Colonic mucosa (tissue), 4 donors: ENCODE measurements at regions of chr20 and their contacts with region 1.

Region 1: DNA sequence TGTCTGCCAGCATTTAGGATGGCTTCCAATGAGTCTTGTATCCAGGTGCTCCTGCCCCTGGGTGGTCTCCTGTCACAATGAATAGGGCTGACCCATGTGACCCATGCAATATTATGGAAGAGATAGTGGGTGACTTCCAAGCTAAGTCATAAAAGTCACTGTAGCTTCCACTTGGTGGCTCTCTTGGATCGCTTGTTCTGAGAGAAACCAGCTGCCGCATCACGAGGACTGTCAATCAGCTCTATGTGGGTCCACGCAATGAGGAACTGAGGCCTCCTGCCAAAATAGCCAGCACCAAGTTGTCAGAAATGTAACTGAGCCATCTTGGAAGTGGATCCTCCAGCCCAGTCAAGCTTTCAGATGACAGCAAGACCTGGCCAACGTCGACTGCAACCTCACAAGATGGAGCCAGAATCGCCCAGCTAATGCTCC is 14.9 kb upstream of the MATN4 start:
- DNase-seq: peak; percentile 74
- H3K4me3 ChIP-seq: no peak overlapping the region
- H3K27ac ChIP-seq: peak overlapping the region; percentile 30
- H3K4me1 ChIP-seq: peaks cover 4% of the 10 kb centered on the region
- H3K27me3 ChIP-seq: no peaks in the 10 kb centered on the region
- CTCF ChIP-seq: peak; percentile 31

Region 2: DNA sequence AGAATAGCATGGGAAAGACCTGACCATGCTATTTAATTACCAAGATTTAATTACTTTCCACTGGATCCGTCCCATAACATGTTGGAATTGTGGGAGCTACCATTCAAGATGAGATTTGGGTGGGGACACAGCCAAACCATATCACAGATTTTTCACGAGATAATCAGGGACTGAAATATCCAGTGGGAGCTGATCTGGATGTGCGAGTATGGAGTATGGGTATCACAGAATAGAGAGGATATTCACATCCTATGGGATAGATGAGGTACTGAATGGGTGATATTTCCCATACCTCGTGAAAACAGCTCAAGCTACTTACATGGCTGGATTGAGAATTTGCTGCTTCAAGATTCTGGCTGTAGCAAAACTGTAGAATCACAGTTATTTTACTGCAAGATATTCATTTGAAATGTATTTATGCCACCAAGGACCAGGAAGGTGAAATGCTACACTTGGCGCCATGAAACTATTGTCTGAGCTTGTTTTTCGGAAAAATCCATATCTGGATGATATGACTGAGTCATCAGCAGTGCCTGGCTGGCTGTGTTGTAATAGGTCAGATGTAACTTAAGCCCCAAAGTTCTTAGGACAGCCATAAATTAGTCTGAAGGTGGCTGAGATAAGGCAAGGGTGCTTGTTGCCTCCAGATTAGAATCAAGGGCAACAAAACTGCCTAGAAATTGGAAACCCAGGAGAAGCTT is 251.9 kb before region 1 on chr20:
- intact Hi-C with region 1: no loop called
- DNase-seq: no peak
- H3K4me3 ChIP-seq: no peak overlapping the region
- H3K27ac ChIP-seq: no peak overlapping the region
- H3K4me1 ChIP-seq: no peaks in the 10 kb centered on the region
- H3K27me3 ChIP-seq: no peaks in the 10 kb centered on the region
- CTCF ChIP-seq: no peak

Region 3: DNA sequence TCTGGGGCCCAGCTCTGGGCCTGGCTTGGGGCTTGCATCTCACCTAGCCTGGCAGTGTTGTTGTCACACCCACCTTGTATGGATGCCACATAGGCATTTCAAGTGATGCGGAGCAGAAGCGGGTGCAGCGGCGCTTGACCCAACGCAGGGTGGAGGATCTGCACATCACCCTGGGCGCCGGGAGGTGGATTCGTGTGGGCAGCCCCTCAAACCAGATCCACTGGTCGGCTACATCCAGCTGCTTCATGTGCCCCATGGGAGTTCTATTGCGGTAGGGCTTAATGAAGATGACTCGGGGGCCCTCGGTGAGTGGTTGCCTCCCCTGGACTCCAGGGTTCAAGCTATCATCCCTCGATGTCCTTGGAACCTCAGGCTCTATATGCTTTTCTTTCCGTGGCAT is 52.0 kb after region 1 on chr20:
- intact Hi-C with region 1: no loop called
- DNase-seq: no peak
- H3K4me3 ChIP-seq: no peak overlapping the region
- H3K27ac ChIP-seq: no peak overlapping the region
- H3K4me1 ChIP-seq: no peaks in the 10 kb centered on the region
- H3K27me3 ChIP-seq: no peaks in the 10 kb centered on the region
- CTCF ChIP-seq: no peak

Region 4: DNA sequence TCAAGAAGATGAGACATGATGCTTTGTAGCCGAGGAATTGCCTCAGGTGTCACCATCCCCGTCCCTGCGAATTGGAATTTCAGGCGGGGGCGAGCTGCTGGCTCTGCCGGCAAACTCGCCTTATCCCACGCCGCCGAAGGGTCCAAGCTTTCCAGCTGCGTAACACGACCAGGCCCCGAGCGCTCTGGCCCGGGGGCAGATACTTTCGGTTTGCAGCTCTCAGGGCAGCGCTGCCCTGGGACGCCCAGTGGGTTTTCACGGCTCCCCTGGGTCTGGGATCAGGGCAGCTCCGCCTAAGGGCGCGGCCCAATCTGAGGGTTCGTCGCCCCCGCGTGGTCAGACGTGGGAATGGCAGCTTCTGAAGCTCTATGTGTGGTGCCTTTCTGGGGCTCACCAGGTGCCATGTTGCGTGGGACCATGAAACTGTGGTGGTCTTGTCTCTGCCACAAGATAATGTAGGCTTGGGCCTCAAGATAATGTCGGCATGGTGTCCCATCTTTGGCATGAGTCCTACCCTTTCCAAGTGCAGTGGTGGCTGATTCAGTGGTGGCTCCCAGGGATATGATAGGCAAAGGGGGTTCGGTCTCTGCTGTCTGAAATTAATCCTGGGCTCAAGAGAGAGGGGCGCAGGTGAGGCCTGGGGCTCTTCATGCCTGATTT is 113.9 kb after region 1 on chr20:
- intact Hi-C with region 1: loop called (anchors 5 kb)
- DNase-seq: peak; percentile 93
- H3K4me3 ChIP-seq: peak overlapping the region; percentile 48
- H3K27ac ChIP-seq: peak overlapping the region; percentile 41
- H3K4me1 ChIP-seq: no peaks in the 10 kb centered on the region
- H3K27me3 ChIP-seq: no peaks in the 10 kb centered on the region
- CTCF ChIP-seq: peak; percentile 89

Region 5: DNA sequence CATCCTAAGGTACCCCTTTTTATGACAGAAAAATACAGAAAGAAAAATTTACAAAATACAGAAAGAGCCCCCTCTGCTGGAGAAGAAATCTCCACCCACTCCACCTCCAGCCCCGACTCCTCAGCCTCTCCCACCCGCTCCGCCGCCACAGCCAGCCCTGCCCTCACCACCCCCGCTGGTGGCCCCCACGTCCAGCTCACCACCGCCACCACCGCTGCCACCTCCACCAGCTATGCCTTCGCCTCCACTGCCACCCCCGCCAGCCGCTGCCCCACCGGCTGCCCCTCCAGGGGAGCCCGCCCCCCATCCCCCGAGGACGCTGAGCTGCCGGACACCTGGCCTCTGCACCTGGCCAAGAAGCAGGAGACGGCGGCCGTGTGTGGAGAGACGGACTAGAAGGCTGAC is 164.3 kb after region 1 on chr20:
- intact Hi-C with region 1: no loop called
- DNase-seq: no peak
- H3K4me3 ChIP-seq: no peak overlapping the region
- H3K27ac ChIP-seq: no peak overlapping the region
- H3K4me1 ChIP-seq: no peaks in the 10 kb centered on the region
- H3K27me3 ChIP-seq: no peaks in the 10 kb centered on the region
- CTCF ChIP-seq: no peak

Region 6: DNA sequence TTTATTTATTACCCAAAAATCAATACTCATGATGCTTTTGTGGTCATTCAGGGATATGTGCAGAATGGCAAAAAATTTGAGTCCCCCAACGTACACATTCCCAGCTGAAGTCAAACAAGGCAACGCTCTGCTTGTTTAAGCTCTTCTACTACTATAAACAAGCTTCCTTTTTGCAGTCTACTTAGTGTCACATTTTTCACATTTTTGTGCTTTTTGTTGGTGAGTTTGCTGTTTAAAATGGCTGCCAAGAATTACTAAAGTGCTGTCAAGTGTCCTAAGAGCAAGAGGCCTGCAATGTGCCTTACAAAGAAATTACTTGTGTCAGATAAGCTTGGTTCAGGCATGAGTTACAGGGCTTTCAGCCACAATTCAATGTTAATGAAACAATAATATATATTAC is 254.0 kb after region 1 on chr20:
- intact Hi-C with region 1: no loop called
- DNase-seq: no peak
- H3K4me3 ChIP-seq: no peak overlapping the region
- H3K27ac ChIP-seq: no peak overlapping the region
- H3K4me1 ChIP-seq: no peaks in the 10 kb centered on the region
- H3K27me3 ChIP-seq: no peaks in the 10 kb centered on the region
- CTCF ChIP-seq: no peak

Region 7: DNA sequence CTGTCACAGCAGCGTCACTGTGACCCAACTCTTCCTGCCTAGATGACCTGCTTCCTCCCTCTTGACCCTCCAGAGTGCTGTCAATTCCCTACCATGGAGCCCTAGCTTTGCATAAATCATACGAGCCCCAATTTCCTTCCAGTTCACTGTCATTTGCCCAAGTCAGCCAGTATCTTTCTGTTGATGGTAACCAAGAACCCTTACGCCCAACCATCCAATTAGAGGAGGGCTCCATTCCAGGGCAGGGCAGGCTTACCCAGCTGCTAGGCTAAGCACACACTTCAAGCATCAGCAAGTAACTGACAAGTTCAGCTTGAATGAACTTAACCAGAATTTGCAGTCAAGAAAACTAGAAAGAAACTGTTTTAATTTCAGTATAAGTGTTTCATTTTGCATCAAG is 443.0 kb after region 1 on chr20:
- intact Hi-C with region 1: loop called (anchors 5 kb)
- DNase-seq: no peak
- H3K4me3 ChIP-seq: no peak overlapping the region
- H3K27ac ChIP-seq: no peak overlapping the region
- H3K4me1 ChIP-seq: no peaks in the 10 kb centered on the region
- H3K27me3 ChIP-seq: no peaks in the 10 kb centered on the region
- CTCF ChIP-seq: no peak